A673 (cell line): ENCODE measurements at regions of chr19 and their contacts with region 1.

Region 1: DNA sequence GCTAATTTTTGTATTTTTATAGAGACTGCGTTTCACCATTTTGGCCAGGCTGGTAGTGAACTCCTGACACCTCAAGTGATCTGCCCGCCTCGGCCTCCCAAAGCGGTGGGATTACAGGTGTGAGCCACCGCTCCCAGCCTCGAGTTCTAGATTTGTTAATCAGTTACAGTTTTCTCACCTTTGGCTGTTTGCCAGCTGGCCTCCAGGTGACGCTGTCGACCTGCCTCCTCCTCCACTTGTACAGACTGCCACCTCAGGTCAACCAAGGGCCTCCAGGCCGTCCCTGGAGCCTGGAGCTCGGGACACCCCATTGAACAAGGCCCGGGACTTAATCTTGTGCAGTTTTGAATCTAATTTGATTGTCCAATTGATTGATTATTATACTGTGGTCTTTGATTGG is 45.5 kb downstream of the IER2 start:
- DNase-seq: no peak
- H3K4me3 ChIP-seq: no peak overlapping the region
- H3K27ac ChIP-seq: no peak overlapping the region
- H3K4me1 ChIP-seq: no peaks in the 10 kb centered on the region
- H3K27me3 ChIP-seq: no peaks in the 10 kb centered on the region
- CTCF ChIP-seq: no peak

Region 2: DNA sequence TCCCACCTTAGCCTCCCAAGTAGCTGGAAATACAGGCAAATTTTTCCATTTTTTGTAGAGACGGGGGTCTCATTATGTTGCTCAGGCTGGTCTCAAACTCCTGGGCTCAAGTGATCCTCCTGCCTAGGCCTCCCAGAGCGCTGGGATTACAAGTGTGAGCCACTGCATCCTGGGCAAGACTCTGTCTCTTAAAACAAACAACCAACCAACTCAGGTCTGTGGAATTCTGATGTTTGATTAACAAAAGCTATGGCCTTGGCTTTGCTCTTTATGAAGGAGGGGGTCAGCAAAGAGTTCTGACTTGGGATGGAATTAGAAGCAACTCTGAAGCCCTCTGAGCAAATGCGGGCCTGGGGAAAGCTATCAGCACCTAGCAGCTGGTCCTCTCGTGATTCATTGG is 72.2 kb after region 1 on chr19:
- CTCF ChIA-PET with region 1: interaction called, 14 read pairs
- POLR2A ChIA-PET with region 1: no interaction called
- intact Hi-C with region 1: no loop called
- DNase-seq: no peak
- H3K4me3 ChIP-seq: no peak overlapping the region
- H3K27ac ChIP-seq: no peak overlapping the region
- H3K4me1 ChIP-seq: no peaks in the 10 kb centered on the region
- H3K27me3 ChIP-seq: no peaks in the 10 kb centered on the region
- CTCF ChIP-seq: no peak

Region 3: DNA sequence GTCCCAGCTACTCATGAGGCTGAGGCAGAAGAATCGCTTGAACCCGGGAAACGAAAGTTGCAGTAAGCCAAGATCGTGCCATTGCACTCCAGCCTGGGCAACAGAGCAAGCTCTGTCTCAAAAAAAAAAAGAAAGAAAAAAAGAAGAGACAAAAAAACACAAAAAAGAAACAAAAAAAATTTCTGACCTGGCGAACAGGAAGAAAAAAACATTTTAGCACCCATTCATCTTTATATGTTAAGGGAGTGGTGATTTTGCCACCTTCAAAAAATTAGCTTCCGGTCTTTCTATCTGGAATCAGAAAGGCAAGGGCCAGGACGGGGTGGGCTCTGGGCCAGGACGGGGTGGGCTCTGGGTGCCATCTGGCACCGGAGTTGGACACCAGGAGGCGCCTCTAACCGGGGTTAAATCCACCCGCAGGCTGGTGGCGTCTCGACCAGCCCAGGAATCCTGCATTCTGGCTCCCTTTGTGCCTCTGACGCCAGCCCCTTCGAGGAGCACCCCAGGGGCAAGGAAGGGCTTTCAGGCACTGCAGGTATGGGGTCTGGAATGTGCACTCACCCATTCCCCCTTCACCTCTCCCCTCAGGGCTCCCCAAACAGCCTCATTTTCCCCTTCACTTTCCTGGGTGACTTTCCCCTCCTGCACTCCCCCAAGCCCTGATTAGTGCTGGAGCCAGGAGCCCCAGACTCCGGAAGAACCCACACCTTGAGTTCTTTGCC is 589.2 kb after region 1 on chr19:
- CTCF ChIA-PET with region 1: interaction called, 13 read pairs
- POLR2A ChIA-PET with region 1: no interaction called
- intact Hi-C with region 1: no loop called
- DNase-seq: peak; percentile 82
- H3K4me3 ChIP-seq: no peak overlapping the region
- H3K27ac ChIP-seq: no peak overlapping the region
- H3K4me1 ChIP-seq: peaks cover 16% of the 10 kb centered on the region
- H3K27me3 ChIP-seq: no peaks in the 10 kb centered on the region
- CTCF ChIP-seq: peak; percentile 78